ENCODE measurements at regions of chr17 and their contacts with region 1.

Region 1: GRCh38 chr17:77999413-78000173 is 41.1 kb downstream of the TNRC6C start:
- ATAC-seq: peak in 1 of 8 experiments; percentile 16
- H3K4me3 ChIP-seq: no peak overlapping the region
- H3K27ac ChIP-seq: no peak overlapping the region
- H3K4me1 ChIP-seq: peaks cover 3 to 4% of the 10 kb centered on the region in 2 donors

Region 2: DNA sequence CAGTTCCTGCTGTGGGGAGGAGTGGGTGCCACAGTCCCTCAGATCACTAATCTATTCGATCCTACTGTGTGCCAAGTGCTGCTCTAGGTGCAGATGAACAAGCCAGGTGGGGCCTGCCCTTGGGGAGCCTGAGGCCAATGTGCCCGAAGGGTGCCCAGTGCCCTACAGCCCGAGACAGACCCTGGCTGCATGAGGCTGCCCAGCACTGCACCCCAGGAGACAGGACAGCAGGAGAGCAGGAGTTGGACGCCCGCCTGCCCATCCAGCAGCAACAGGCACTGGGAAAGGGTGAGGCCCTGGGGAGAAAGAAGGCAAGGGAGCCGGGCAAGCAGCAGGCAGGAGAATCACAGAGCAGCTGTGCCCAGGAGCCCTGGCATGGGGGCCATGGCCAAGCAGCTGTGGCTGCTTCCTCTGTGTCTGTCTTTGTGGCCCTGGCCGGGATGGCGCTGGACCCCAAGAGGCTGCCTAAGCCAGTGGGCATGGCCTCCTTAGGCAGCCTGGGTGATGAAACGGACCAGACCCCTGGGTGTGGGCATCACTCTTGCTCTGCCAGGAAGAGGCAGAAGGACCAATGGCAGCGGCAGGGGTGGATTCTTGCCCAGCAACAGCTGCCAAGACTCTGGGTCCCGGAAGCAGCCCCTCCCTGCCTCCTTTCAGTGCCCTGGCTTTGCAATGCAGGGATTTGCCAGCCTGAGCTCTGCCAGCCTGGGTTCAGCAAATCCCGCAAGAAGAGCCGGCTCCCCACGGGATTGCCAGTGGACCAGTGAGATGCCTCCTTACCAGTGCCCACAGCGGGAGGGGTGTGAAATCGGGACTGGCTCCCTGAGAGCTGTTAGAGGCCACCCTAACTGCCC is 220.7 kb before region 1 on chr17:
- in situ Hi-C with region 1: loop called in 1 of 9 experiments (anchors 25 kb)
- ATAC-seq: peak in 3 of 8 experiments; percentile 39 to 70 (median 60)
- H3K4me3 ChIP-seq: no peak overlapping the region
- H3K27ac ChIP-seq: no peak overlapping the region
- H3K4me1 ChIP-seq: peaks cover 7 to 21% of the 10 kb centered on the region in 2 donors

Measured in motor neuron (in vitro differentiated cells).